HCT116 (cell line): ENCODE measurements at regions of chr1 and their contacts with region 1.

Region 1: GRCh38 chr1:205440476-205441317 is 15.1 kb downstream of the BLACAT1 start:
- DNase-seq: peak; percentile 85
- ATAC-seq: peak; percentile 86
- H3K4me3 ChIP-seq: peak overlapping the region in 1 of 2 experiments; percentile 21; a peak in 1 of 4 replicates
- H3K27ac ChIP-seq: peak overlapping the region; percentile 80
- H3K4me1 ChIP-seq: peaks cover 54 to 76% of the 10 kb centered on the region in 2 experiments
- H3K27me3 ChIP-seq: no peaks in the 10 kb centered on the region
- CTCF ChIP-seq: no peak
- POLR2A ChIP-seq: no peak
- RAD21 ChIP-seq: no peak

Region 2: DNA sequence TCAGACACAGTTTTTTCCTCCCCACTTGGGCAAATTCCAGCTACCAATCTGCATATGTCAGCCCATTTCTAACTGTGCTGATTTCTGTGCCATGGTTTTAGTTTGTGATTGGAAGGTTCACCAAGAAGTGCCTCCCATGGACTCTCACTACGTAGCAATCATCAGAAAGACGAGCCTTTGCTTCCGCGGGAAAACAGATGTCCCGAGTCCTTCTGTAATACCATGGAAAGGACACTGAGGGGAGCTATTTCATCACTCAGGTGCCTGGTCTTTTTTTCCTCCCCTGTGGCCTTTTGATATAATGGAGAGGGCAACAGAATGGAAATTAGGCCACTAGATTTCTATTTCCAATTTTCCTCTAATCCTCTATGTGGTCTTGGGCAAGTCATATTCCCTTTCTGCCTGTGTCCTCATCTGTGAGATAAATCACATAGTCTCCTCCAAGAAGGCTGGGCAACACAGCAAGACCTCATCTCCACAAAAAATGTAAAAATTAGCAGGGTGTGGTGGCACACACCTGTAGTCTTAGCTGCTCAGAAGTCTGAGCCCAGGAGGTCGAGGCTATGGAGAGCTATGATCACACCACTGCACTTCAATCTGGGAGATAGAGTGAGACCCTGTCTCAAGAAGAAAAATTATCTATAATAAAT is 43.6 kb before region 1 on chr1:
- CTCF ChIA-PET with region 1: interaction called, 10 read pairs
- POLR2A ChIA-PET with region 1: interaction called, 5 read pairs
- RAD21 ChIA-PET with region 1: no interaction called
- intact Hi-C with region 1: no loop called
- DNase-seq: peak; percentile 77
- ATAC-seq: peak; percentile 99
- H3K4me3 ChIP-seq: no peak overlapping the region
- H3K27ac ChIP-seq: no peak overlapping the region
- H3K4me1 ChIP-seq: peaks cover 0 to 8% of the 10 kb centered on the region in 2 experiments; a peak in 2 of 4 replicates
- H3K27me3 ChIP-seq: no peaks in the 10 kb centered on the region
- CTCF ChIP-seq: peak; percentile 82 to 97 (median 93)
- POLR2A ChIP-seq: no peak
- RAD21 ChIP-seq: peak; percentile 99